Right lobe of liver (tissue), 6 donors: ENCODE measurements at regions of chr10 and their contacts with region 1.

Region 1: DNA sequence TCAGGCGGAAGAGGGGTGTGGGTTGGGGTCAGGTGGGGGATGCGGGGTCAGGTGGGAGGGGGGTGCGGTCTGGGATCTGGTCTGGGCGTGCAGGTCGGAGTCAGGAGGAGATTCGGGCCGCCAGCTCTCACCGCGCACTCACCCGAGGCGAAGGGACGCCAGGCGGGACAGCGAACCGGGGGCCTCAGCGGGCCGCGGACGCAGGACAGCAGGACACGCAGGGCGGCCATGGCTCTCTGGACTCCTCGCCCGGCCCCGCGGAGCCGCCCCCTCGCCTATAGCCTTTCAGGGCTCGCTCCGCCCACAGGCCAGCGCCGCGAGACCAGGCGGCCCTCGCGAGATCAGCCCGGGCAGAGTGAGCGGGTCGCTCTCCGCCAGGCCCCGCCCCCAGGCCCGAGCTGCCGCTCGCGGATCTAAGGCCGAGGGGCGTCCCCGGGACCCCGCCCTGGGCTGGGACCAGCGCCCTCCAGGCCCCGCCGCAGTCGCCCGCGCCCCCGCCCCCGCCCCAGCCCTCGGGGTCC is at the start of gene ECHS1:
- DNase-seq: peak; percentile 98 to 99 (median 98)
- ATAC-seq: peak; percentile 89 to 96 (median 95)
- H3K4me3 ChIP-seq: peak within 1 kb of the TSS; percentile 66 to 76 (median 66)
- H3K27ac ChIP-seq: peak within 1 kb of the TSS; percentile 75 to 92 (median 80)
- H3K4me1 ChIP-seq: peaks cover 0 to 20% (median 9%) of the 10 kb centered on the region in 4 donors
- H3K27me3 ChIP-seq: no peaks in the 10 kb centered on the region
- CTCF ChIP-seq: no peak
- POLR2A ChIP-seq: peak; percentile 81
- total RNA-seq, gene ECHS1: 293 to 780 (median 436) TPM

Region 2: GRCh38 chr10:133329491-133330202 is 43.5 kb before region 1 on chr10:
- intact Hi-C with region 1: loop called in 1 of 2 experiments (anchors 10 kb)
- DNase-seq: peak; percentile 84 to 88 (median 88)
- ATAC-seq: peak; percentile 91 to 98 (median 96)
- H3K4me3 ChIP-seq: peak overlapping the region; percentile 8 to 39 (median 31)
- H3K27ac ChIP-seq: no peak overlapping the region
- H3K4me1 ChIP-seq: peaks cover 0 to 14% (median 0%) of the 10 kb centered on the region in 4 donors
- H3K27me3 ChIP-seq: peaks cover 14 to 25% of the 10 kb centered on the region in 2 donors
- CTCF ChIP-seq: peak; percentile 80 to 99 (median 98)
- POLR2A ChIP-seq: no peak

Region 3: GRCh38 chr10:133475821-133476640 is 102.9 kb after region 1 on chr10:
- intact Hi-C with region 1: no loop called
- DNase-seq: no peak
- ATAC-seq: peak in 3 of 4 donors; percentile 30 to 50 (median 40)
- H3K4me3 ChIP-seq: no peak overlapping the region
- H3K27ac ChIP-seq: no peak overlapping the region
- H3K4me1 ChIP-seq: no peaks in the 10 kb centered on the region
- H3K27me3 ChIP-seq: no peaks in the 10 kb centered on the region
- CTCF ChIP-seq: no peak
- POLR2A ChIP-seq: no peak